ENCODE measurements at regions of chr7 and their contacts with region 1.

Region 1: GRCh38 chr7:726084-726853 is at the start of gene DNAAF5:
- DNase-seq: peak; percentile 81
- ATAC-seq: peak; percentile 91
- H3K4me3 ChIP-seq: peak within 1 kb of the TSS; percentile 75
- H3K27ac ChIP-seq: peak within 1 kb of the TSS; percentile 68
- H3K4me1 ChIP-seq: peaks cover 17% of the 10 kb centered on the region
- H3K27me3 ChIP-seq: no peaks in the 10 kb centered on the region
- CTCF ChIP-seq: 0 out of 2 replicates have a peak, but pooled peaks have one; percentile 0
- POLR2A ChIP-seq: no peak
- RAD21 ChIP-seq: no peak; the same call in 1 of the 2 replicates
- total RNA-seq, gene DNAAF5: 12.4 and 13.9 TPM in 2 replicates

Region 2: DNA sequence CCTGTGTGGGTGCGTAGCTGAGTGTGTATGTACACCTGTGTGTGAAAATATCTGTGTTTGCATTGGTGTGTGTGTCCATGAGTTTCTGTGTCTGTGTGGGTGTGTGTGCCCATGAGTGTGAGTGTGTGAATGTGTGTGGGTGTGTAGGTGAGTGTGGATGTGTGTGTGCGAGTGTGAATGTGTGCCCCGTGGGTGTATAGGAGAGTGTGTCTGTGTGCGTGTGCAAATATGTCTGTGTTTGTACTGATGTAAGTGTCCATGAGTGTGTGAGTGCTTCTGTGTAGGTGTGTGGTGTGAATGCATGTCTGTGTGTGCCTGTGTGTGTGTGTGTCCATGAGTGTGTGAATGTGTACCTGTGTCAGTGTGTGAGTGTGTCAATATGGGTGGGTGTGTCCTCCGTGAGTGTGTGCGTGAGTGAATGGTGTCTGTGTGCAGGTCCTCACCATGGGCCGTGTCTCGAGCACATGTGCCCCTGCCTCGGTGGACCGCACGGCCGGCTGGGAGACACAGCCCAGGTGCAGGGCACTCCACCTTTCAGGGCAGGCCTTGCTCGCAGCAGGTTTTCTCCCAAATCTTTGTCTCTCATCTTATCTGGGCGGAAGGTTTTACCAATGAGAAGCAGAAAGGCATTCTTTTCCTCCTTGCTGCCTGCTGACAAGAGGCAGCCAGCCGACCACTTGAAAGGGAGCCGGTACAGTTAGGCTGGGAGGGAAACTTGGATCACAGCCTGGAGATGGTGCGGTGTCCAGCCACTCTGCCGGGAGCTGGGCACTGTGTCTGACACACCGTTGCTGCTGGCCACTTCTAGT is 641.0 kb before region 1 on chr7:
- CTCF ChIA-PET with region 1: no interaction called
- POLR2A ChIA-PET with region 1: no interaction called
- dilution Hi-C with region 1: no loop called
- in situ Hi-C with region 1: no loop called
- intact Hi-C with region 1: no loop called
- DNase-seq: peak; percentile 54
- ATAC-seq: no peak
- H3K4me3 ChIP-seq: no peak overlapping the region
- H3K27ac ChIP-seq: no peak overlapping the region
- H3K4me1 ChIP-seq: peaks cover 30% of the 10 kb centered on the region
- H3K27me3 ChIP-seq: peaks cover 8% of the 10 kb centered on the region
- CTCF ChIP-seq: no peak
- POLR2A ChIP-seq: no peak
- RAD21 ChIP-seq: no peak

Region 3: DNA sequence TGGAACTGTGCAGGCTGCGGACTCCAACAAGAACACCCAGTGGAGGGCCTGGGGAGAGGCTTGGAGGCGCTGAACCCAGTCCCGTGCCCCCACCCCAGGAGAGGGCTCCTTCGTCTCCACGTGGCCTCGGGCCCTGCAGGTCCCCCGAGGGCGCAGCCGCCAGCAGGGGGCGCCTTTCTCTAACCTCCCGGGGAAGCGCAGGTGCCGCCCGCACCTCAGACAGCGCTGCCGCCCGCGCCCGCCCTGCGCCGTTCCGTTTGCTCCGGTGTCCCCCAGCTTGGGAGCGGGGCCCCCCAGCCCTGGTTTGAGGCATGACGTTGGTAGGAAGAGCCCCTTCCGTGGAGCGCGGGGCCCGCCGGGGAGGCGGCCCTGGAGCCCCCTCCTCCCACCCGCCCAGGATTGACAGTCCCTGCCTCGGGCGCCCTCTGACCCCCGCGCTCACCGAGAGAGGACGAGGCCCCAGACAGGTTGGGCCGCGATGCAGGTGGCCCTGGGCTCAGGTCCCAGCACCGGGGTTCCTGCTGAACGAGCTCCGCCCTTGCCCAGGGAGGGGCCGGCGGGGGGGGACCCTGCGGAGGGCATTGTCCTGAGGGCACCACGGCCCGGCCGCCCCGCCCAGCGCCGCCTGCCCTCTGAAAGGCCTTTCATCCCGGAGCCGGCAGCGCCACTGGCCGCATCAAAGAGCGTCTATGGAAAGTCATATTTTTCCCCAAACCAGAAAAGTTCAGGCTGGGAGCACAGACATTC is 393.4 kb before region 1 on chr7:
- CTCF ChIA-PET with region 1: no interaction called
- POLR2A ChIA-PET with region 1: no interaction called
- dilution Hi-C with region 1: no loop called
- in situ Hi-C with region 1: no loop called
- intact Hi-C with region 1: loop called (anchors 5 kb)
- DNase-seq: peak; percentile 36
- ATAC-seq: peak; percentile 96
- H3K4me3 ChIP-seq: no peak overlapping the region; the same call in 1 of the 2 replicates
- H3K27ac ChIP-seq: no peak overlapping the region
- H3K4me1 ChIP-seq: peaks cover 2% of the 10 kb centered on the region
- H3K27me3 ChIP-seq: peaks cover 28% of the 10 kb centered on the region
- CTCF ChIP-seq: peak; percentile 74
- POLR2A ChIP-seq: no peak
- RAD21 ChIP-seq: peak; percentile 80

Region 4: DNA sequence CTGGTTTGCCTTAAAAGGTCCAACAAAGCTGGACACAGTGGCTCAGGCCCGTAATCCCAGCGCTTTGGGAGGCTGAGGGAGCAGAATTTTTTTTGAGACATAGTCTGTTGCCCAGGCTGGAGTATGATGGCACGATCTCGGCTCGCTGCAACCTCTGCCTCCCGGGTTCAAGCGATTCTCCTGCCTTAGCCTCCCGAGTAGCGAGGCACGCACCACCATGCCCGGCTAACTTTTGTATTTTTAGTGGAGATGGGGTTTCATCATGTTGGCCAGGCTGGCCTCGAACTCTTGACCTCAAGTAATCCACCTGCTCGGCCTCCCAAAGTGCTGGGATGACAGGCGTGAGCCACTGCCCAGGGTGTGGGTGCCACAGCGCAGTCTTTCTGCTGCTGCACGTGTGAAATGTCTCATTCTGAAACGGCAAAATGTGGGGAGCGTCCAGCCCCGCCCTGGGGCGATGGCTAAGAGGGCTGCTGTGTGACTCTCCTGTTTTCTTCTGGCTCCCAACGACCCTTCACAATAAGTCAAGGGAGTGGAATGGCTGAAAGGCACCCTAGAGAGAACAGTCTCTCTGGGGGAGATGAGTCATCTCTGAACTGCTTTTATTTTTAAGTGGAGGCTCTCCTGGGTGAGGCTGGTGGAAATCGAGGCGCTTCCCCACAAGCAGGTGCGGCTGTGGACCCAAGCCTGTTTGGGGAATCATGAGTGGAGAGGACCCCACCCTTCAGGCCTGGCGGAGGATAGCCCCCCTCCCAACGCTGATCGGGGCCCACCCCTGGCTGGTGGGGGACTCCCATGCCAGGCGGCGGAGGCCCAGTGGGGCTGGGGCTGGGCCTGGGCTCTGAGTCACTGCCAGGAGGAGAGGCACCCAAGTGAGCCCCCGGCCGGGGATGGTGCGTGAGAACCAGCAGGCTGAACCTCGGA is 210.1 kb after region 1 on chr7:
- CTCF ChIA-PET with region 1: no interaction called
- POLR2A ChIA-PET with region 1: no interaction called
- dilution Hi-C with region 1: no loop called
- in situ Hi-C with region 1: no loop called
- intact Hi-C with region 1: no loop called
- DNase-seq: peak; percentile 28
- ATAC-seq: peak; percentile 73
- H3K4me3 ChIP-seq: no peak overlapping the region
- H3K27ac ChIP-seq: no peak overlapping the region
- H3K4me1 ChIP-seq: no peaks in the 10 kb centered on the region
- H3K27me3 ChIP-seq: no peaks in the 10 kb centered on the region; the same call in none of the 2 replicates
- CTCF ChIP-seq: no peak
- POLR2A ChIP-seq: no peak
- RAD21 ChIP-seq: no peak

Measured in IMR-90 (cell line).